HEK293T (cell line): ENCODE measurements at regions of chr10 and their contacts with region 1.

Region 1: GRCh38 chr10:100743626-100744135 is 1.7 kb upstream of the PAX2 start:
- DNase-seq: peak; percentile 84

Region 2: GRCh38 chr10:100562008-100562711 is 181.5 kb before region 1 on chr10:
- CTCF ChIA-PET with region 1: interaction called, 22 read pairs
- POLR2A ChIA-PET with region 1: interaction called, 4 read pairs
- DNase-seq: peak; percentile 87

Region 3: DNA sequence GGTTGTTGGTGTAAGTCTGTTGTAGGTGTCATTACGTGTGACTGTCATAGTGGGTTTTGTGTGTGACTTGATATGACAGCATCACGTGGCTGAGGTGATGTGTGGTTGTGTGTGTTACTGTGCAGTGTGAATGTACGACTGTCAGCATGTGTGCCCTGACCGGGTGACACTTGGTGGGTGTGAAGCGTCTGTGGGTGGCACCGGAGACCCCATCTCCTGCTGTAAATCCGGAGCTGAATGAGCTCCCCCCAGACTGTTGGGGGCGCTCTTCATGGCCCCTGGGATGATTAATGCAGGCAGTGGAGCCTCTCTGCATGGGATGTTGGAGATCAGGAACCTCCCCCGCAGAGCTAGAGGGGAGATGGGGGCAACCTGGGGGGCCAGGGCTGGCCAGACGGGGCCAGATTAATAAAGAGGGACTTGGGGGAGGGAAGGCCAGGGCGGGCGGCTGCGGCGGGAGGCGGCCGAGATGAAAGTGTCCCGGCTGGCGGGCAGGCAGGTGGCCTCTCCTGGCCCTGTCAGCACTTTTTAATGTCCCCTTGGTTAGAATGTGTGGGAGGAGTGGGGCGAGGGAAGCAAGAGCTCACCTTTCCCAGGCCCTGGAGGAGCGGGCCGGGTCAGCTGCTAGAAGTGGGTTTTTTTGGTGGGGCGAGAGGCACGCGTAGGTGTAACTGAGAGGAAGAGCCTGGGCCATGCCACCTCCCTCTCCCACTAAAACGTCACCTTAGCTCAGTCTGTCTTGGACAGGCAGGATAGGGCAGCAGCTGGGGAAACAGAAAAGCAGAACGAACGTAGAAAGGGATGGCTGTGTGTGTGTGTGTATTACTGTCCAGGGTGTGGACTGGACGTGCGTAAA is 173.8 kb before region 1 on chr10:
- CTCF ChIA-PET with region 1: interaction called, 10 read pairs
- POLR2A ChIA-PET with region 1: no interaction called
- DNase-seq: peak; percentile 51

Region 4: DNA sequence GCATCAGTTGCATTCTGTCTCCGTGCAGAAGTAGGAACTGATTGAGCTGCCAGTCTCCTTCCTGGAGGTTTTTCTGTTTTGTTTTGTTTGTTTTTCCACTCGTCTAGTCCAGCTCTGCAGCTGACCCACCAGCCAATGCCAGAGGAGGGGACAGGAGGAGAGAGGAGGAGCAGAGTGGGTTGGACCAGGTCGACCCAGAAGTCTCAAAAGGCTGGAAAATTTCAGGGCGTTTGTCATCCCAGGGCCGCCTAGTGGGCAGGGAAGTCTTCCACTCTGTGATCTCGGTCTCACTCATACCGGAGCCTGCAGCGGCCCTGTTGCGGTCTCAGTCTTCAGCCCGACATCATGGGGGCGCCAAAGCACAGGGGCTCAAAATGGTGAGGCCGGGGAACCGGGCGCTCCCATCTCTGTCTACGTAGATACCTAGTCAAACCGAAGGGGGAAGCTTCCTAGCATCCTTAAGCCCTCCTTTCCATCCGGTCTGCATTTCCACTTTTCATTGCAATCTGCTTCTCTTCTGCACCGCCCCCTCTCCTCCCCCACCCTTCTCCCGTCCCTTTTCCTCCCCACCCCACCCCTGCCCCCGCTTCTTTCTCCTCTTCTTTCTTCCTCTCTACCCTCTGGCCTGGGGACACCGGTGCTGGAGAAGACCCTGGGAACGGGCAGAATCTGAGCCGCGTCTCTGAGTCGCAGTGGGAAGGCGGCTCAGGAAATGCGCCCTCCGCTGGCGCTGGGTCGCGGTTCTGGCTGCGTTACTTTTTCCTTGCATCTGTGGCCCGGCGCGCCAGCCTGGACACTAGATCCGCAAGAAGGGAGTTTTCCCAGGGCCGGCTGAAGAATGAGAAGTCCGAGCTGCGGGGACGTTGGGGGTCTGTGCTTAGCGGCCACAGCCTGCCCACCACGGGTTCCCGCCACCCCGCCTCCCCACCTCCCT is 14.5 kb before region 1 on chr10:
- CTCF ChIA-PET with region 1: interaction called, 22 read pairs
- POLR2A ChIA-PET with region 1: no interaction called
- DNase-seq: peak; percentile 79

Region 5: GRCh38 chr10:100872034-100872791 is 128.5 kb after region 1 on chr10:
- CTCF ChIA-PET with region 1: interaction called, 11 read pairs
- POLR2A ChIA-PET with region 1: interaction called, 3 read pairs
- DNase-seq: peak; percentile 91